ENCODE measurements at regions of chr17 and their contacts with region 1.

Region 1: DNA sequence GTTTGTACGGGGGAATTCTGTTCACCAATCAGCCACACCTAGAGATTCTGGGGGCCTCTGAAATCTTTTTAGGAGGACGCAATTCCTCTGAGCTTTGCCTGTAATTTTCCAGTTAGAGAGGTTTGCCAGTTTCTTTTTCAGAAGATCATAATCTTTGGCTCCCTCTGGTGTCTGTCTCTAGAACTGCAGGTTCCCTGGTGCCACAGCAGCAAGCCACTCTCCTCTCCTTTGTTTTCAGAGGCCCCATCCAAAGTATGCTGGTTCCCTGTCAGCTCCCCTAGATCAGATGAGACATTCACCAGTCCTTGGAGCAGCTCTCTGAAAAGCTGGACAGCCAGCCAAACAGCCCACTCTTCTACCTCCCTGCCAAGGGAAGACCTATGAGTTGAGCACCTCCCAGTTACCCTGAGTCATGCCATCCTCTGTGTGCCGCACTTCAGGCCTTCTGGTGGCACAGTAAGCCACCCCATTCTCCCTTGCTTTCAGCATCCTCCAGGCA is 36.1 kb downstream of the RNF112 start:
- DNase-seq: peak; percentile 53 to 60
- ATAC-seq: peak; percentile 88 to 93
- H3K4me3 ChIP-seq: no peak overlapping the region
- H3K27ac ChIP-seq: peak overlapping the region; percentile 1 to 68 (median 50)
- H3K4me1 ChIP-seq: peaks cover 0 to 3% of the 10 kb centered on the region in 2 donors
- H3K27me3 ChIP-seq: no peaks in the 10 kb centered on the region
- CTCF ChIP-seq: peak; percentile 89 to 96 (median 94)
- POLR2A ChIP-seq: no peak

Region 2: GRCh38 chr17:19362277-19363113 is 84.6 kb before region 1 on chr17 and contains the start of gene B9D1:
- in situ Hi-C with region 1: loop called (anchors 5 kb)
- intact Hi-C with region 1: loop called (anchors 1 kb)
- DNase-seq: peak; percentile 86 to 93
- ATAC-seq: peak; percentile 96 to 97
- H3K4me3 ChIP-seq: peak within 1 kb of the TSS; percentile 60 to 86 (median 72)
- H3K27ac ChIP-seq: peak within 1 kb of the TSS; percentile 79 to 92 (median 84)
- H3K4me1 ChIP-seq: peaks cover 4 to 9% of the 10 kb centered on the region in 2 donors
- H3K27me3 ChIP-seq: no peaks in the 10 kb centered on the region
- CTCF ChIP-seq: peak; percentile 99
- POLR2A ChIP-seq: peak in 1 of 2 donors; percentile 44
- total RNA-seq, gene B9D1: 6.5 to 16.4 (median 14.5) TPM

Region 3: DNA sequence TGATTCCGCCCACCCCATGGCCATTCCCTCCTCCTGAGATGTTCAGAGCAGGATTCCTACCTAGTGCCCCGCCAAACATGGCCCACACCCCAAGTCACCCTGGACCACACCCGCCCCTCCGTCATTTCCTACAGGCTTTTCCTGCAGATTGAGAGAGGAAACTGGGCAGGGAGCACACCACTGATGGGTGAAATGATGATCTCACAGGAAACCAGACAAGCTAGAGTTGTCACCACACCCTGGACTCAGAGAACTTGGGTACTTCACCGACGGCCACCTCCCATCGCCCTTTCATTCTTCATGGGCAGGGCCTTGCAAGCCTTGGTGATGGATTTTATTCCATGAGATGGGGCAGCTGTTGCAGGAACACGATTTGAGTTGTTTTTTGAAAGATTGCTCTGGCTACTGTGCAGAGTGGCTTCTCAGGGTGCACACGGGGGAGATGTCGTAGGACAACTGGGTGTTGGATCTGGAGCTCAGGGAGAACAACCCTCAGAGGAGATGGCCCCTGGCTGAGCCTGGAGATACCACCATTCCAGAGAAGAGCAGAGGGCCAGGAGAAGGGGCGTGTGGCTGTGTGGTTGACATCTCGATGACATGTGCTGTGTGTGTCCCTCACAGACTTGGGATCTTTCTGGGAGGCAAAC is 77.2 kb before region 1 on chr17:
- in situ Hi-C with region 1: loop called in 1 of 4 experiments (anchors 5 kb)
- intact Hi-C with region 1: loop called (anchors 5 kb)
- DNase-seq: no peak
- ATAC-seq: no peak
- H3K4me3 ChIP-seq: no peak overlapping the region
- H3K27ac ChIP-seq: peak overlapping the region in 1 of 4 donors; percentile 18
- H3K4me1 ChIP-seq: no peaks in the 10 kb centered on the region
- H3K27me3 ChIP-seq: no peaks in the 10 kb centered on the region
- CTCF ChIP-seq: no peak
- POLR2A ChIP-seq: no peak

Region 4: DNA sequence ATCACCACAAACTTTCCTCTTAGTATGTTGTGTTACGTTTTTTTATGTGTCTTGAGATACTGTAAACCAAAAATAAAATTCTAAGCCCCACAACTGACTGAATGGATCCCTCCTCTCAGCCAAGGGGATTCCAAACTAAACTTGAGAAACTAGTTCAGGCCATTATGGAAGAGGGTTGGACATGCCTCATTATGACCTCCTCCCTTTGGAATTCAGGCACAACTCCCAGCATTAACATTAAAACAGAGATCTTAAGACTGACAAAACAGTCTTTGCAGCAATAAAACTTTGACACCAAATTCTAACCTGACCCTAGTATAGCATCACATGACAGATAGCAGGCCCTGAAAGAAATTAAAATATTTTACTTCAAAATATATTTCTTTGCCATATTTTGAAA is 35.4 kb after region 1 on chr17:
- in situ Hi-C with region 1: no loop called
- intact Hi-C with region 1: no loop called
- DNase-seq: no peak
- ATAC-seq: no peak
- H3K4me3 ChIP-seq: no peak overlapping the region
- H3K27ac ChIP-seq: no peak overlapping the region
- H3K4me1 ChIP-seq: no peaks in the 10 kb centered on the region
- H3K27me3 ChIP-seq: no peaks in the 10 kb centered on the region
- CTCF ChIP-seq: no peak
- POLR2A ChIP-seq: no peak

Measured in gastrocnemius medialis (tissue), 4 donors.